Aorta (tissue), 5 donors: ENCODE measurements at regions of chr4 and their contacts with region 1.

Region 1: DNA sequence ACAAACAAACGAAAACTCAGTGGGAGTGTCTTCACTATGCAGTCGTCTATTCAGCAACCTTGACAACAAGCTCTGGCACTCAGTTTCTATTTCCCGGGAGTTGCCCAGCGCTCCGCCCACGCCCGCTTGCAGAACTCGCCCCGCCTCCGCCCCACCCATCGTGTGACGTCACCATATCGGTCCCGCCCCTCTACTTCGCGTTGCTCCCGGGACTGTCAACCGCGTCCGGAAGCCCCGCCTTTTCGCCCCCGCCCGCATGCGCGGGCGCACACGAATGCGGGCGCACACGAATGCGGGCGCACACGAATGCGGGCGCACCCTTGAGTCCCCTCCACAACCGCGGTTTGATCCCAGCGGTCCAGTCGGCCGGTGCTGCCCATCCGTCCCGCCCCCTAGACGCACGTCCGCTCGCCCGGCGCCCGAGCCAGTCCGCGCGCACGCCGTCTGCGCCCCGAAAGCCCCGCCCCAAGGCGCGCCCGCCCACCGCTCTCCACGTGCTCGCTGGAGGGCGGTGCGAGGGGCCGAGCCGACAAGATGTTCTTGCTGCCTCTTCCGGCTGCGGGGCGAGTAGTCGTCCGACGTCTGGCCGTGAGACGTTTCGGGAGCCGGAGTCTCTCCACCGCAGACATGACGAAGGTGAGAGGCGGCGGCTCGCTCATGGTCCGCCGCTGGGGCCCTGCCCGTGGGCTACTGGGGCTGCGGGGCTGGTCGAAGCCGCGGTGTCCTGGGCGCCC is at the start of gene LAP3:
- DNase-seq: peak; percentile 98 to 100
- ATAC-seq: peak; percentile 100
- H3K4me3 ChIP-seq: peak within 1 kb of the TSS; percentile 49 to 78
- H3K27ac ChIP-seq: peak within 1 kb of the TSS in 1 of 2 donors; percentile 87
- H3K4me1 ChIP-seq: no peaks in the 10 kb centered on the region
- H3K27me3 ChIP-seq: no peaks in the 10 kb centered on the region
- total RNA-seq, gene LAP3: 65.4 to 93.4 TPM

Region 2: GRCh38 chr4:17436750-17437090 is 140.4 kb before region 1 on chr4:
- intact Hi-C with region 1: no loop called
- DNase-seq: no peak
- ATAC-seq: no peak
- H3K4me3 ChIP-seq: no peak overlapping the region
- H3K27ac ChIP-seq: no peak overlapping the region
- H3K4me1 ChIP-seq: no peaks in the 10 kb centered on the region
- H3K27me3 ChIP-seq: no peaks in the 10 kb centered on the region

Region 3: GRCh38 chr4:17511950-17512795 is 64.9 kb before region 1 on chr4 and contains the start of gene QDPR:
- intact Hi-C with region 1: loop called in 1 of 2 experiments (anchors 5 kb)
- DNase-seq: peak; percentile 91 to 94
- ATAC-seq: peak; percentile 94
- H3K4me3 ChIP-seq: peak within 1 kb of the TSS; percentile 30 to 61
- H3K27ac ChIP-seq: peak within 1 kb of the TSS in 1 of 2 donors; percentile 53
- H3K4me1 ChIP-seq: no peaks in the 10 kb centered on the region
- H3K27me3 ChIP-seq: no peaks in the 10 kb centered on the region
- total RNA-seq, gene QDPR: 15.6 to 22.7 TPM

Region 4: DNA sequence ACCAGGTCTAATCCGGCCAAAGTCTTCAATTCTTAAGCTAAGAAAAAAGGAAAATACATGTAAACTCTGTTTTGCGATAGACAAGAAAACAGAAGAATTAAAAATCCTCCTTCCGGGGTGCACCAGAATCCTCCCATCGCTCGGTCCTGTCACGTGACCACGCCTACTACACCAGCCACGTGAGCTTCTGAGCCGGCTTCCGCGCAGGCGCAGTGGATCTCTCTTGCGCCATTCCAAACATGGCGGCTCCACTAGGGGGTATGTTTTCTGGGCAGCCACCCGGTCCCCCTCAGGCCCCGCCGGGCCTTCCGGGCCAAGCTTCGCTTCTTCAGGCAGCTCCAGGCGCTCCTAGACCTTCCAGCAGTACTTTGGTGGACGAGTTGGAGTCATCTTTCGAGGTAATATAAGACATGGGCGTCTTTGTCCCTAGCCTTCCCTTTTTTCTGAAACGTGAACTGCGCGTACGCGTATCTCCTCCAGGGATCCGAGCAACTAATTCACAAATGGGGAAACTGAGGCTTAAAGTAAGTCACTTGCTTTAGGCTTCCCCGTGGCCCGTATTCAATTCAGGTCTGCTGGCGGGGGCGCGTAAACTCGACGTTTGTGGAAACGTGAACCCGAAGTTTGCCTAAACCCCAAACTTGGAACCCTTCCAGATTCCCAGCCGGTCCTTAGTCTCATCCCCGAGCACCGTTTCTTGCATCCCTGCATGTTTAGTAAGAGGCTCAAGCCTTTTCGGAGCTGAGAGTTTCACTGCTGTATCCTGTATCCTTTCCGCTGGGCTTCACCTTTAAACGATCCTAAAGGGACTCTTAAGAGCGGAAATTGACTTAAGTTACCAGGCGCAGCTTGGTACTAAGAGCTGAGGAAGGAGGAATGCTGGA is 37.6 kb after region 1 on chr4 and contains the start of gene MED28:
- intact Hi-C with region 1: loop called (anchors 1 to 5 kb)
- DNase-seq: peak; percentile 98 to 99
- ATAC-seq: peak; percentile 98
- H3K4me3 ChIP-seq: peak within 1 kb of the TSS; percentile 96 to 99
- H3K27ac ChIP-seq: peak within 1 kb of the TSS in 1 of 2 donors; percentile 66
- H3K4me1 ChIP-seq: peaks cover 0 to 5% of the 10 kb centered on the region in 2 donors
- H3K27me3 ChIP-seq: no peaks in the 10 kb centered on the region
- total RNA-seq, gene MED28: 40.9 to 52.7 TPM

Region 5: DNA sequence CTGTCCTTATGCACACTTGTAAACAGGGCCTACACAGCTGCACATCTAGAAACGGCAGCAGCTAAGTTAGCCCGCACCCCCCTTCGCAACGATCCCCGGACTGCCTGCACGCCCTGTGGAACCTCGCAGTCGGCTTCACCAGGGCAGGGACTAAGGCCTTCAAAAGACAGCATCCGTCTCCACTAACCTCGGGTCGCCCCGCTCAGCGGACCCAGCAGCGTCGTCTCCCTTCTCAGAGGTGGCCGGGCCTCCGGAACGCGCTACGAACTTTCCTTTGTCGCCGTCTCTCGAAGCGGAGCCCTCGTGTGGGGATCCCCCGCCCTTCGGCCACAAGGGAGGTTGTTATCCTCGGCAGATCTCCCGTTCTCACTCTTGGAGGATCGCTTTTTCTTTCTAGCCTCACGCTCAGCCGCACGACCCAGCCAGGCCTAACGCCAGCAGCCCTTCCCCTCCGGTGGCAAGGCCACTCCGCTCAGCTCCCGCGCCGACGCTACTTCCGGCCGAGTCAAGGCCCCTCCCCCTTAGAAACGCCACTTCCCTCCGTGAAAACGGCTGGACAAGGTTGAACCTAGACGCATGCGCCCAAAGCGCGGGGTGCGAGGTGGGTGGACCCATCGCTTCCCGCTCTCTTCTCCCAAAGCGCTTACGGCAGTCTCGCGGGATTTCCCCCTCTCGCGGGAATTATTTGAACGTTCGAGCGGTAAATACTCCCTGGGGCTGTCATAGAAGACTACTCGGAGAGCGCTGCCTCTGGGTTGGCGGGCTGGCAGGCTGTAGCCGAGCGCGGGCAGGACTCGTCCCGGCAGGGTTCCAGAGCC is 233.4 kb after region 1 on chr4 and contains the starts of genes DCAF16 and NCAPG:
- intact Hi-C with region 1: loop called in 1 of 2 experiments (anchors 5 kb)
- DNase-seq: peak; percentile 100
- ATAC-seq: peak; percentile 100
- H3K4me3 ChIP-seq: peak within 1 kb of the TSS; percentile 69 to 75
- H3K27ac ChIP-seq: peak within 1 kb of the TSS; percentile 36 to 83
- H3K4me1 ChIP-seq: no peaks in the 10 kb centered on the region
- H3K27me3 ChIP-seq: no peaks in the 10 kb centered on the region
- total RNA-seq, gene DCAF16: 29.2 to 34.5 TPM
- total RNA-seq, gene NCAPG: 0.78 to 1.8 TPM

Region 6: DNA sequence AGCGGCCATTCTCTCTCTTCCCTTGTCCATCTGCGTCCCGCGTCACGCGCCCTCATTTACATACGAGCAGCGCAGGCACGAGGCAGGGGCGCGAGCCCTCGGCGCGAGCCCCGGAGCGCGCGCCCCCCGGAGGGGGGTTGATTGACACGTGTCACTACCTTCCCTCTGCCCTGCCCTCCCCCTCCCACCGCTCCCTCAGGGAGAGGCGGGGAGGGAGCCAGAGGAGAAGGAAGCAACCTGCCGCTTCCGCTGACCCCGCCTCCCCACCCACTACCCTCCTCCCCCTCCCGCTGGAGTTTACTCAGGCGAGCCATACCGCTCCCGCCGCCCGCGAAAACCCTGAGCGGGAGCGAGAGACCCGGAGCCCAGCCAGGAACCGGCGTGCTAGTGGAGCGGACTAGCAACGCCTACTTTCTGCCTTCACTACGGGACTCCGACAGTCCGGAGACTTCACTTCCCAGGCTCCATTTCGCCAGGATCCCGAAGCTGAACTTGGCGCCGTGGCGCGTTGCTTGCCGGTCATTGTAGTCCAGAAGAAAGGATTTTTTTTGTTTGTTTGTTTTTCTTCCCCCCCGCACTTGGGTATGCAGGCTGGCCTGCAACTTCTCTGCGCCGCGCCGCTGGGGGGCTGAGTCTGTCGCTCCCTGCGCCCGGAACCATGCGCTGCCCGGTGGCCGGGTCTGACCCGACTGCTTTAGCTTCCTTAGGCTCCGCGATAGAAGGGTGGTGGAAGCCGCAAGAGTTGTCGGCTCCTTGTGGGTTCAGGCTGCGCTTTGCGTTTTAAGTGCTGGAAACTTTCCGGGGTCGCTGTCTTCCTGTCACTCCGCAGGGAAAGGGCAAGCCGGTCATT is 444.8 kb after region 1 on chr4 and contains the start of gene LCORL:
- intact Hi-C with region 1: loop called in 1 of 2 experiments (anchors 10 kb)
- DNase-seq: peak; percentile 95 to 96
- ATAC-seq: peak; percentile 96
- H3K4me3 ChIP-seq: peak within 1 kb of the TSS; percentile 81 to 90
- H3K27ac ChIP-seq: peak within 1 kb of the TSS; percentile 31 to 38
- H3K4me1 ChIP-seq: no peaks in the 10 kb centered on the region
- H3K27me3 ChIP-seq: no peaks in the 10 kb centered on the region
- total RNA-seq, gene LCORL: 7.9 to 14.7 TPM